Left cardiac atrium (tissue), 4 donors: ENCODE measurements at regions of chr11 and their contacts with region 1.

Region 1: GRCh38 chr11:35237860-35238715 is 99.1 kb downstream of the CD44 start:
- DNase-seq: peak; percentile 38
- ATAC-seq: peak in 1 of 2 donors; percentile 47

Region 2: GRCh38 chr11:34394771-34395300 is 843.3 kb before region 1 on chr11:
- intact Hi-C with region 1: no loop called
- DNase-seq: no peak
- ATAC-seq: no peak

Region 3: DNA sequence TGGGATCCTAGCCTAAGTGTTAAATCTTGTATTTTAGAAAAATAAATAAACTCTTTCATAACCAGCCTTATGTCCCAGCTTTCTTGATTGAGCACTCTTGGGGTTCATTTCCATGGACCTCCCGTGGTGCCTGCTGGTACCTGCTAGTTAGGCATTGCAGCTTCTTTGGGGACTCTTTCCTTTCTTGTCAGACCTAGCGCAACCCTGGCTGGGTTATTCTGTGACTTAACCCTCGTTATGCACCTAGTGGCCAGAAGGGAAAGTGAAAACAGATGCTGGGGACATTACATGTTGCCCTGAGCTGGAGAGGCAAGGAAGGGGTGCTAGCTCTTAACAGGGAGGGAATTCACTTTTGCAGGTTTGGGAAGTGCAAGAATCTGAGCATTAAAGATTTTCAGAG is 368.7 kb before region 1 on chr11:
- intact Hi-C with region 1: no loop called
- DNase-seq: no peak
- ATAC-seq: no peak

Region 4: GRCh38 chr11:34926101-34926830 is 311.8 kb before region 1 on chr11:
- intact Hi-C with region 1: loop called in 1 of 2 experiments (anchors 2 kb)
- DNase-seq: no peak
- ATAC-seq: peak; percentile 72

Region 5: DNA sequence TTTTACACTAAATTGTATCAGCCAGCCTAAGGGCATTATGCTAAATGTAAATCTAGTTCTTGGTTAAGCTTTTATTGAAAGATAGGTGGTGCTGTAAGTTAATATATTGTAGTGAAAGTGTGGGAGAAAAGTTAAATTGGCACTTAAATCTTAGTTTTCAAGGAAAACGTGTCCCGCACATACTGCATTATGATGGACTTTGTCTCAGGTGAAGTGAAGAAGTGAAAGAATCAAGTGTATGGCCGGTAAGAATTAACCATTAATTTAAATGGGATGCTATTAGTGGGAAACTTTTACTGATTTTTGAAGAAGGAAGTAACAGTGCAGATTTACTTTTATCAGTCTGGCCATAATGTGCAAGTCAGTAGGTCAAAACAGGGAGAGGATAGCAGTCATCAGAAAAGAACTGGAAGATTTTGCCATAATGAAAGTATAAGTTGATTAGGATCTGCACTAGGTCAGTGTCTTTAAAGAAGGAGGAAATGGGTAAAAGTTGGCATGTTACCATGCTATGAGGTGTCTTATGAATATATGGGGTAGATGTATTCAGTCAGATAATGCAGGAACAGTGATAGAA is 240.0 kb before region 1 on chr11:
- intact Hi-C with region 1: loop called in 1 of 2 experiments (anchors 5 kb)
- DNase-seq: no peak
- ATAC-seq: peak in 1 of 2 donors; percentile 23

Region 6: GRCh38 chr11:35144136-35144741 is 93.8 kb before region 1 on chr11:
- intact Hi-C with region 1: loop called in 1 of 2 experiments (anchors 10 kb)
- DNase-seq: no peak
- ATAC-seq: no peak

Region 7: GRCh38 chr11:35362521-35362990 is 124.5 kb after region 1 on chr11:
- intact Hi-C with region 1: no loop called
- DNase-seq: no peak
- ATAC-seq: no peak

Region 8: DNA sequence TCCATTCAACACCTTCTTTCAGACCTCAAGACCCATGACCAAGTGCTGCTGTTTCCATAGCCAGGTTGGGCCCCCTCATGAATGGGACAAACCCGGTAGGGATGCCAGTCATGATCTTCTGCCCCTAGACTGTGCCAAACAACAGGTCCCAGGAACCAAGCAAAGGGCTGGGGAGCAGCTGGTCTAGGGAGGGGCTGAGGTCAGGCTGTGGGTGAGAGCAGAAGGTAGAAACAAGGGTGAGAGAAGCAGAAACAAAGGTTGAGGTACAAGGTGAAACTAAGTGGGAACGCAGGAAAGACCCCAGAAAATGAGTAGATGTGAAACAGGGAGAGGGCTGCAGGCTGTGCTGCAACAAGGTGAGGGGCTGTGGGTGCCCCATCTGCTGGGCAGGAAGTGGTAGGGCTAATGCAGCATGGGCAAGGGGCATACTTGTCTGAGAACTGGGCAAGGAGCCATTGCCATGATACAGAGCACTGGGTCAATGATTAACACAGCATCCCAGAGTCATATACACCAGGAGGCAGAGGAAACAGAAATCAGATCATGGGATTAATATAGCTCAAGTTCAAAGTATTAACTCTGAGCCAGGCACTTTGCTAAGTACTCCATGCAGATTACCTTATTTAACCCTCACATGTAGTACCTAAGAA is 135.3 kb after region 1 on chr11:
- intact Hi-C with region 1: no loop called
- DNase-seq: no peak
- ATAC-seq: peak in 1 of 2 donors; percentile 40

Region 9: DNA sequence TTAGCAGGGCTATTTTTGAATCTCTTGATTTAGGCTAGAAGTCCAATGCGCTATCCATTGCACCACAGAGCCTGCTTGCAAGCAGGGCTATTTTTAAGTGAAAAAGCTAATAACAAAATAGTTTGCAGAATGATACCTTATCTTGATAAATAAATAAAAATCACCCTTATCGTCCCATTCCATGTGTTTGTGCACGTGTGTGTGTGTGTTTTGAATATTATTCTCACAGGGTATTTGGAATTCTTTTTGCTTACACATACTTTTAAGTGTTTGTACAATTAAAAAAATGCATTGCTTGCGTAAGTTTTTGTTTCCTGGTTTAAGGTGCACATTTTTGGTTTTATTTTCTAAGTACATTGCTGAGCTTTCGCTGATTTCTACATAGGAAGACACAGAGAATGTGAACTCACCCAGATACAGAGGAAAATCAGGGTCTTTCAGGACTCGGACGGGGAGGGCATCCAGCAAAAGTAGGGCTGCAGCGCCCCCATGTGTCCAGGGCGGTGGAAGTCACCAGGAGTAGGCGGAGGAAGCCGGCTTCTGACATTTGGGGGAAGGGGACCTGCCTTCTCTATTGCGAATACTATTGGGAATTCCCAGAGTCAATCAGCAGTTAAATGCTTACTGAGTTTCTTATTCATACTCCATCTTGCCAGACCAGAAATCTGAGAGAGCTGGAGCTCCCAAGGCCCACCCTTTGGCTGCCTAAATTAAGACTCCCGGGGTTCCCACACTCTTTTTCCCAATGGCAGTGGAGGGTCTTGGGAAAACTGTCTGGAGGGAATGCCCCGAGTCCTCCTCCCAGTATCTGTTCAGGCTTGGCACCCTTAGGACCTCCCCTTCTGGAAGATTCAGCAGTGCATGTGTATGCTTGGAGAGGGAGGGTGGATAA is 154.1 kb after region 1 on chr11:
- intact Hi-C with region 1: loop called in 1 of 2 experiments (anchors 5 kb)
- DNase-seq: peak; percentile 87
- ATAC-seq: peak; percentile 93 to 96